ENCODE measurements at regions of chr21 and their contacts with region 1.

Region 1: GRCh38 chr21:38219049-38219628 is 37.7 kb upstream of the KCNJ15 start:
- DNase-seq: peak; percentile 60
- ATAC-seq: peak; percentile 84

Region 2: GRCh38 chr21:38159355-38159754 is 59.8 kb before region 1 on chr21:
- intact Hi-C with region 1: loop called (anchors 5 kb)
- DNase-seq: peak; percentile 47
- ATAC-seq: peak; percentile 65

Region 3: DNA sequence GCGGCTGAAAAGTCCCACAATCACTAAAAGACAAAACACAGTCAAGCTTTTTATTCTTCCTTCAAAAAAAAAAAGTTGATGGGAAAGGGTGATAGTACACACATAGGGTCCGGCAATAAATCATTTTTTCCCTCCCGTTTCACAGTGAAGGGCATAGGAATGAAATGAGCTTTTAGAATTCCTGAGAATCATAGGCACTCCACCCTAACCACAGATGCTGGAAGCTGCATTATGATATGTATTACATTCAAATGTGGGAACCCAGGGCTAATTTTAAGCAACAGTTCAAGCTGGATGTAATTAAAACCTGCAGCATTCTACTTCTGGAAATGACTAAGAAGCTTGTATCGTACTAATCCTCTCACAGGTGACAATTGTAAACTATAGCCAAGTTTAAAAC is 38.0 kb before region 1 on chr21:
- intact Hi-C with region 1: no loop called
- DNase-seq: no peak
- ATAC-seq: no peak

Measured in left ventricle myocardium superior (tissue), 1 donor.